ENCODE measurements at regions of chr3 and their contacts with region 1.

Region 1: GRCh38 chr3:131349946-131350347 is 31.6 kb upstream of the NUDT16 start:
- DNase-seq: no peak
- H3K4me3 ChIP-seq: no peak overlapping the region
- H3K27ac ChIP-seq: peak overlapping the region; percentile 58
- H3K4me1 ChIP-seq: peaks cover 47% of the 10 kb centered on the region
- H3K27me3 ChIP-seq: no peaks in the 10 kb centered on the region
- CTCF ChIP-seq: no peak
- POLR2A ChIP-seq: no peak

Region 2: GRCh38 chr3:131142580-131142979 is 207.4 kb before region 1 on chr3:
- CTCF ChIA-PET with region 1: no interaction called
- POLR2A ChIA-PET with region 1: no interaction called
- dilution Hi-C with region 1: no loop called
- intact Hi-C with region 1: no loop called
- DNase-seq: no peak
- H3K4me3 ChIP-seq: no peak overlapping the region
- H3K27ac ChIP-seq: no peak overlapping the region
- H3K4me1 ChIP-seq: no peaks in the 10 kb centered on the region
- H3K27me3 ChIP-seq: no peaks in the 10 kb centered on the region
- CTCF ChIP-seq: no peak
- POLR2A ChIP-seq: no peak

Region 3: DNA sequence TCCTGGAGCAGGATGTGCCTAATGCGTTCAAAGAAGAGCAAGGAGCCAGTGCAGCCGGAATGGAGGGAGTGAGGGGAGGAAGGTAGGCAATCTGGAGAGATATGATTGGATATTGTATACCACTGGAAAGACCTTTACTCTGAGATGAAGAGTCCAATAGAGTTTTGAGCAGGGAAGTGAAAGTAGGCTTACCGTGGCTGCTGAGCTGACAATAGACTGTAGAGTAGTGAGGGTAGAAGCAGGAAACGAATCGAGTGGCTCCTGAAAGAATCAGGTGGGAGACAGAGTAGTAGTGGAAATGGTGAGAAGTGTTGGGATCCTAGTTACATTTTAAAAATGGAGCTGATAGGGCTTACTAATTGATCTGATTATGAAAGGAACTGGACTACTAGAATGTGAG is 20.2 kb before region 1 on chr3:
- CTCF ChIA-PET with region 1: no interaction called
- POLR2A ChIA-PET with region 1: no interaction called
- dilution Hi-C with region 1: no loop called
- intact Hi-C with region 1: no loop called
- DNase-seq: no peak
- H3K4me3 ChIP-seq: no peak overlapping the region
- H3K27ac ChIP-seq: no peak overlapping the region
- H3K4me1 ChIP-seq: no peaks in the 10 kb centered on the region
- H3K27me3 ChIP-seq: peaks cover 0 to 1% of the 10 kb centered on the region in 2 experiments
- CTCF ChIP-seq: no peak
- POLR2A ChIP-seq: no peak

Region 4: GRCh38 chr3:131361464-131362421 is 11.8 kb after region 1 on chr3:
- CTCF ChIA-PET with region 1: interaction called, 4 read pairs
- POLR2A ChIA-PET with region 1: no interaction called
- dilution Hi-C with region 1: no loop called
- intact Hi-C with region 1: loop called (anchors 1 kb)
- DNase-seq: peak; percentile 16
- H3K4me3 ChIP-seq: peak overlapping the region in 1 of 3 experiments; percentile 28
- H3K27ac ChIP-seq: no peak overlapping the region
- H3K4me1 ChIP-seq: no peaks in the 10 kb centered on the region
- H3K27me3 ChIP-seq: no peaks in the 10 kb centered on the region
- CTCF ChIP-seq: no peak
- POLR2A ChIP-seq: no peak

Region 5: GRCh38 chr3:131402391-131403039 is 52.6 kb after region 1 on chr3:
- CTCF ChIA-PET with region 1: no interaction called
- POLR2A ChIA-PET with region 1: no interaction called
- dilution Hi-C with region 1: no loop called
- intact Hi-C with region 1: loop called (anchors 1 kb)
- DNase-seq: peak; percentile 87
- H3K4me3 ChIP-seq: no peak overlapping the region
- H3K27ac ChIP-seq: peak overlapping the region; percentile 87
- H3K4me1 ChIP-seq: peaks cover 24% of the 10 kb centered on the region
- H3K27me3 ChIP-seq: no peaks in the 10 kb centered on the region
- CTCF ChIP-seq: no peak
- POLR2A ChIP-seq: no peak

Region 6: GRCh38 chr3:131502530-131503245 is 152.7 kb after region 1 on chr3 and contains the start of gene MRPL3:
- CTCF ChIA-PET with region 1: no interaction called
- POLR2A ChIA-PET with region 1: no interaction called
- dilution Hi-C with region 1: no loop called
- intact Hi-C with region 1: no loop called
- DNase-seq: peak; percentile 67
- H3K4me3 ChIP-seq: peak within 1 kb of the TSS; percentile 65 to 85 (median 85)
- H3K27ac ChIP-seq: peak within 1 kb of the TSS; percentile 62
- H3K4me1 ChIP-seq: peaks cover 32% of the 10 kb centered on the region
- H3K27me3 ChIP-seq: no peaks in the 10 kb centered on the region
- CTCF ChIP-seq: no peak
- POLR2A ChIP-seq: peak; percentile 56
- total RNA-seq, gene MRPL3: 68.2 and 68.8 TPM in 2 replicates

Region 7: DNA sequence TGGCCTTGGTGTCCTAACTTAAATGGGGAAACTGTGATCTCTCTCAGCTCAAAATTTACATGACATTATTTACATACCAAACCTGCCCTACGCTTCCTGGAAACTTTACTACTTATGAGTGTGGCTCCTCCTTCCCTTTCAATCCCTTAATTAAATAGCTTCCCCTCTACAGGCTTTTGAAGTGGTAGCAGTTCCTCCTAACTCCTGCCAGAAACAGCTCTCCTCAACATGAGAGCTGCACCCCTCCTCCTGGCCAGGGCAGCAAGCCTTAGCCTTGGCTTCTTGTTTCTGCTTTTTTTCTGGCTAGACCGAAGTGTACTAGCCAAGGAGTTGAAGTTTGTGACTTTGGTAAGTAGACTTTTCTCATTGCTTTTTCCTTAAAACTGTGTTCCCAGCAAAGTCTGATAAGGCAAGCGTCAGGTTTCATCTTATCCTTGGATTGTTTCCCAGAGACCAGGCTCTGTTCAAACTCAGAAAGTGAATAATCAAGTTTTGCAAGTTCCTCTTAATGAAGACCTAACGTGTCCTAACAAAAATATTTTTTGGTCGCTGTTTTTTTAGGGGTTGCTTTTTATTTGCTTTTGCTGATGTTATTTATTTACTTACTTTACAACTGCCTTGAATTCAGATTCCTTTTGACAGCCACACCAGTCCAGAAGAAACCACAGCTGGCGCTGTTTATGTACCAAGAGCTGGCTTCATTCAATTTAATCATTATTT is 967.4 kb after region 1 on chr3 and contains the start of gene ACP3:
- CTCF ChIA-PET with region 1: no interaction called
- POLR2A ChIA-PET with region 1: no interaction called
- dilution Hi-C with region 1: no loop called
- intact Hi-C with region 1: no loop called
- DNase-seq: peak; percentile 10
- H3K4me3 ChIP-seq: no peak within 1 kb of the TSS
- H3K27ac ChIP-seq: no peak within 1 kb of the TSS
- H3K4me1 ChIP-seq: no peaks in the 10 kb centered on the region
- H3K27me3 ChIP-seq: peaks cover 0 to 2% of the 10 kb centered on the region in 2 experiments
- CTCF ChIP-seq: no peak
- POLR2A ChIP-seq: no peak
- total RNA-seq, gene ACP3: not detected in 2 replicates